ENCODE measurements at regions of chr17 and their contacts with region 1.

Region 1: DNA sequence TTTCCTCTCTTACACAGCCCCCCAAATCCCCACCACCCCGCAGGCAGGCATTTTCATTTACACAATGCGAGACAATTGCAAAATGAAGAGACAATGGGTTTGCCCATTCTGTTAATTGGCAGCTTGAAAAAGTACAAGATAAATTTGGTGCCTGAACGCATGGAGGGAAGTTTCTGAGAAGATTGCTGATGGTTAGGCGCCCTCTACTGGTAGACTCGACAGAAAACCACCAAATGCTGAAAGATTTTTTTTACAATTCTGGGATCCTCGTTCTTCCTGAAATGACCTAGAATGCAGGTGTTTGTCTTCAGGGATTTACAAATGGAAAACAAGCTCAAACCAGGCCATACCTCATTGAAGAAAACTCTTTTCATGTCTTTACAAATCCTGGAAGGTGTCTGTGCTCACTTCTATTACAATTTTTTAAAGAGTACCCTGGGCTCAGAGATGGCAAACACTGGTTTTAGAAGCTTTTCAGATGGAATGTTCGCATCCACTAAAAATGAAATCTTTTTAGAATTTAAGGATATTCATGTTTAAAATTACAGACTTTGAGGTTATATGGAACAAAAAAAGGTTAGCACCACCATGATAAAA is 338.5 kb downstream of the PMP22 start:
- DNase-seq: peak; percentile 18 to 82
- ATAC-seq: peak in 1 of 3 donors; percentile 50
- H3K4me3 ChIP-seq: no peak overlapping the region
- H3K4me3 Mint-ChIP-seq: no peak overlapping the region
- H3K27ac ChIP-seq: no peak overlapping the region
- H3K27ac Mint-ChIP-seq: no peak overlapping the region
- H3K4me1 ChIP-seq: no peaks in the 10 kb centered on the region
- H3K4me1 Mint-ChIP-seq: no peaks in the 10 kb centered on the region
- H3K27me3 ChIP-seq: no peaks in the 10 kb centered on the region
- H3K27me3 Mint-ChIP-seq: peaks cover 7 to 14% of the 10 kb centered on the region in 2 donors
- CTCF ChIP-seq: peak; percentile 82

Region 2: GRCh38 chr17:13031718-13032350 is 1894.8 kb before region 1 on chr17:
- intact Hi-C with region 1: loop called (anchors 5 kb)
- DNase-seq: peak in 1 of 2 donors; percentile 79
- ATAC-seq: peak in 2 of 3 donors; percentile 80 to 81
- H3K4me3 ChIP-seq: no peak overlapping the region
- H3K4me3 Mint-ChIP-seq: no peak overlapping the region
- H3K27ac ChIP-seq: no peak overlapping the region
- H3K27ac Mint-ChIP-seq: no peak overlapping the region
- H3K4me1 ChIP-seq: peaks cover 3% of the 10 kb centered on the region
- H3K4me1 Mint-ChIP-seq: peaks cover 0 to 11% of the 10 kb centered on the region in 2 donors
- H3K27me3 ChIP-seq: no peaks in the 10 kb centered on the region
- H3K27me3 Mint-ChIP-seq: peaks cover 7 to 13% of the 10 kb centered on the region in 2 donors
- CTCF ChIP-seq: peak; percentile 89

Region 3: GRCh38 chr17:13337864-13338371 is 1588.7 kb before region 1 on chr17:
- intact Hi-C with region 1: loop called (anchors 5 kb)
- DNase-seq: peak in 1 of 2 donors; percentile 46
- ATAC-seq: peak in 1 of 3 donors; percentile 38
- H3K4me3 ChIP-seq: no peak overlapping the region
- H3K4me3 Mint-ChIP-seq: no peak overlapping the region
- H3K27ac ChIP-seq: no peak overlapping the region
- H3K27ac Mint-ChIP-seq: no peak overlapping the region
- H3K4me1 ChIP-seq: no peaks in the 10 kb centered on the region
- H3K4me1 Mint-ChIP-seq: peaks cover 0 to 5% of the 10 kb centered on the region in 2 donors
- H3K27me3 ChIP-seq: no peaks in the 10 kb centered on the region
- H3K27me3 Mint-ChIP-seq: peaks cover 3 to 20% of the 10 kb centered on the region in 2 donors
- CTCF ChIP-seq: peak; percentile 48

Region 4: DNA sequence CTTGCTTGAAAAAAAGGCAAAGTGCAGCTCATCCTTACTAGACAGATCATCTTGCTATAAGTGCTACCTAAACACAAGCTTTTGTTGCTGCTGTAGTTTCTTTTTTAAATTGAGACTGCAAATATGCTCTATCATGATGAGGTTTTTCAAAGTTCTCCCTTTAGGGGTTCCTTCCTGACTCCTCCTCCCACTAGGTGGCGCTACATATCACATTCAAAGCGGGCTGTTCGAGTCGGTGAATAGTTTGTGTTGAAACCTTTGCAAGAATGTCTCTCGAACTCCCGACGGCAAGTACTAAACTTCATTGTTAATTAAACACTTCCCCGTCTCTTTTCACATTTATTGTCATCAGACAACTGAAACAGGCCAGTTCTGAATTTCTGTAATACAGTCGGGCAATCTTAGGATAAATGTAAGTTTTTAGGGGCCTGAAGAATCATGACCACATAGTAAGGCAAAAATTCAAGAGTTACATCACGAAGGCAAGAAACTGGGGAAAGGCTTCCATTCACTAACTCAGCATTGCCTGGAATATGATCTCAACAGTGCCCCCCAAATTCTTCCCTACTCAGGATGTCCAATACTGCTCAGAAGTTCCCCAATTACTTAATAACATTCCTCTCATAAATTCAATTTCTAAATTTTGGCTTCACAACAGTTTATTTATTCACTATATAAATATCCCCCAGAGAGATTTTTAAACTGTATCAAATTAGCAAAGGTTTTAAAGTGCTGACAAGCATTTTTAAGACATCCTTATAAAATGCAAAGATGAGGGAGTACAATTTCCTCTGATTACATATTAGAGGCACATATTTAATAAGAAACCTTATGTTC is 1331.6 kb before region 1 on chr17:
- intact Hi-C with region 1: loop called (anchors 1 kb)
- DNase-seq: peak; percentile 53 to 91
- ATAC-seq: peak; percentile 71 to 84 (median 76)
- H3K4me3 ChIP-seq: no peak overlapping the region
- H3K4me3 Mint-ChIP-seq: no peak overlapping the region
- H3K27ac ChIP-seq: no peak overlapping the region
- H3K27ac Mint-ChIP-seq: no peak overlapping the region
- H3K4me1 ChIP-seq: no peaks in the 10 kb centered on the region
- H3K4me1 Mint-ChIP-seq: peaks cover 5 to 6% of the 10 kb centered on the region in 2 donors
- H3K27me3 ChIP-seq: peaks cover 3% of the 10 kb centered on the region
- H3K27me3 Mint-ChIP-seq: peaks cover 41 to 42% of the 10 kb centered on the region in 2 donors
- CTCF ChIP-seq: peak; percentile 93

Region 5: DNA sequence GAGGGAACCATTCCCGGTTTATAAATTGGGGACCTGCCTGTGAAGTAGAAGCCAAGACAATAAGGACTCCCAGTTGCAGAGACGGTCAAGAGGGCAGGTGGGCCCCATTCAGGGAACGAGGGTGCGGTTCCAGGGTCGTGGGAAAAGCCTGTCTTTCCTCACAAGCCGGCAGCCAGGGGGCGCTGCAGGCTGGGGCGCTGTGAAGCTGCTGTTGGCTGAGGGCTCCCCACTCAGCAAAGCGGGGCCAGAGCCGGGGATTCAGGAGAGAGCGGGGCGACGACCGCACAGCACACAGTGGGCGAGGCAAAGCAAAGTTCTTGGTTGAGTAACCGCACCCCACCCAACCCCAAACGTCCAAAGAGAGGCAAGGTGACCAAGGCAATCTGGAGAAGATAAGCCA is 714.8 kb before region 1 on chr17:
- intact Hi-C with region 1: loop called (anchors 10 kb)
- DNase-seq: peak; percentile 55 to 70
- ATAC-seq: peak in 1 of 3 donors; percentile 70
- H3K4me3 ChIP-seq: no peak overlapping the region
- H3K4me3 Mint-ChIP-seq: peak overlapping the region; percentile 53
- H3K27ac ChIP-seq: no peak overlapping the region
- H3K27ac Mint-ChIP-seq: peak overlapping the region in 1 of 2 donors; percentile 19
- H3K4me1 ChIP-seq: peaks cover 25% of the 10 kb centered on the region
- H3K4me1 Mint-ChIP-seq: peaks cover 40 to 57% of the 10 kb centered on the region in 2 donors
- H3K27me3 ChIP-seq: no peaks in the 10 kb centered on the region
- H3K27me3 Mint-ChIP-seq: no peaks in the 10 kb centered on the region
- CTCF ChIP-seq: peak; percentile 67

Region 6: GRCh38 chr17:14308965-14309879 is 617.4 kb before region 1 on chr17:
- intact Hi-C with region 1: loop called (anchors 5 kb)
- DNase-seq: peak; percentile 92 to 95
- ATAC-seq: peak; percentile 98 to 99 (median 99)
- H3K4me3 ChIP-seq: peak overlapping the region; percentile 17
- H3K4me3 Mint-ChIP-seq: peak overlapping the region; percentile 85
- H3K27ac ChIP-seq: no peak overlapping the region
- H3K27ac Mint-ChIP-seq: peak overlapping the region; percentile 69 to 82
- H3K4me1 ChIP-seq: peaks cover 38% of the 10 kb centered on the region
- H3K4me1 Mint-ChIP-seq: peaks cover 62 to 66% of the 10 kb centered on the region in 2 donors
- H3K27me3 ChIP-seq: no peaks in the 10 kb centered on the region
- H3K27me3 Mint-ChIP-seq: no peaks in the 10 kb centered on the region
- CTCF ChIP-seq: no peak